Activated B cell treated with CpG ODN at 0.5 μM for 24 hours (primary cell): ENCODE measurements at regions of chr20 and their contacts with region 1.

Region 1: DNA sequence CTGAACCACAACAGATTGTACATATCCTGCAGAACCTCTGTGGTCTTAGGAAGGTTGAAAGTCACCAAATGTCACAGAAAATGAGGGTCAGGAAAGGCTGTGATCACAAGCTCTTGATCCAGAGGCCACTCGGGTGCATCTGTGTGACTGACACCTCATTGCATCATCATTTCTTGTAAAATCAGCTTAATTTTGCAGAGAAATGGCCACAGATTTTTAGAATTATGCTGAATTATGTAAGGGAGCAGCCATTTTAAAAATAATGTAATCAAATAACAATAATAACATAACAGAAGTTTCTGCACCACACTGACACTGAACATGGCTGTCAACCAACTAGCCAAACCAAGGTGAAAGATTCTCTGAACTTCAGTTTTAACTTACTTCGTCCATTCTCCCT is 32.5 kb upstream of the PRND start:
- DNase-seq: no peak
- ATAC-seq: no peak
- H3K4me3 Mint-ChIP-seq: no peak overlapping the region
- H3K27ac Mint-ChIP-seq: no peak overlapping the region
- H3K4me1 Mint-ChIP-seq: peaks cover 46% of the 10 kb centered on the region
- H3K27me3 Mint-ChIP-seq: no peaks in the 10 kb centered on the region
- CTCF ChIP-seq: no peak

Region 2: DNA sequence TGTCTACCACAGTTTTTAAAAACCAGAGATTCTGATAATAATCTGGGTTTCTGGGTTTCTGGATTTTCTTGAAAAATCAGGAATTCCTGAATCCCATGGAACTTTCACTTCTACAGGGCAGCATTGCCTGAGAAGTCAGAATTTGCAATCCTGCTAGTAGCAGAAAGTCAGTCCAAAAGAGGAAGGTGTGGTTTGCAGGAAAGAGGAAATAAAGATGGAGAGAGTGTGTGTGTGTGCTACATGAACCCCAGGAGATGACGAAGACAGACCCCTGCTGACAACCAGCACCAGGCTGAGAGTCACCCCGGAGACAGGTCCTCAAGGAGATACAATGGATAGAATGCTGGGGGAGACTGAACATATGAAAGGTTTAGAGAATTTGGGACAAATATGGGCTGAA is 77.4 kb after region 1 on chr20:
- CTCF ChIA-PET with region 1: no interaction called
- POLR2A ChIA-PET with region 1: no interaction called
- intact Hi-C with region 1: no loop called
- DNase-seq: no peak
- ATAC-seq: peak; percentile 90
- H3K4me3 Mint-ChIP-seq: peak overlapping the region; percentile 42
- H3K27ac Mint-ChIP-seq: peak overlapping the region; percentile 83
- H3K4me1 Mint-ChIP-seq: peaks cover 26% of the 10 kb centered on the region
- H3K27me3 Mint-ChIP-seq: no peaks in the 10 kb centered on the region
- CTCF ChIP-seq: no peak

Region 3: GRCh38 chr20:5090191-5090590 is 401.0 kb after region 1 on chr20:
- CTCF ChIA-PET with region 1: no interaction called
- POLR2A ChIA-PET with region 1: interaction called, 19 read pairs
- intact Hi-C with region 1: no loop called
- DNase-seq: no peak
- ATAC-seq: peak; percentile 83
- H3K4me3 Mint-ChIP-seq: peak overlapping the region; percentile 42
- H3K27ac Mint-ChIP-seq: peak overlapping the region; percentile 85
- H3K4me1 Mint-ChIP-seq: peaks cover 38% of the 10 kb centered on the region
- H3K27me3 Mint-ChIP-seq: no peaks in the 10 kb centered on the region
- CTCF ChIP-seq: no peak